Naive thymus-derived CD4-positive, alpha-beta T cell (primary cell): ENCODE measurements at regions of chr2 and their contacts with region 1.

Region 1: GRCh38 chr2:24577481-24577880 is 86.4 kb downstream of the NCOA1 start:
- DNase-seq: no peak
- ATAC-seq: no peak
- H3K4me3 ChIP-seq: no peak overlapping the region
- H3K4me3 Mint-ChIP-seq: peak overlapping the region in 5 of 10 donors; percentile 16 to 73 (median 61)
- H3K27ac ChIP-seq: no peak overlapping the region
- H3K27ac Mint-ChIP-seq: peak overlapping the region in 3 of 9 donors; percentile 5 to 57 (median 35)
- H3K4me1 ChIP-seq: peaks cover 6 to 18% of the 10 kb centered on the region in 2 donors
- H3K4me1 Mint-ChIP-seq: peaks cover 40 to 81% (median 72%) of the 10 kb centered on the region in 7 donors
- H3K27me3 ChIP-seq: no peaks in the 10 kb centered on the region
- H3K27me3 Mint-ChIP-seq: no peaks in the 10 kb centered on the region

Region 2: DNA sequence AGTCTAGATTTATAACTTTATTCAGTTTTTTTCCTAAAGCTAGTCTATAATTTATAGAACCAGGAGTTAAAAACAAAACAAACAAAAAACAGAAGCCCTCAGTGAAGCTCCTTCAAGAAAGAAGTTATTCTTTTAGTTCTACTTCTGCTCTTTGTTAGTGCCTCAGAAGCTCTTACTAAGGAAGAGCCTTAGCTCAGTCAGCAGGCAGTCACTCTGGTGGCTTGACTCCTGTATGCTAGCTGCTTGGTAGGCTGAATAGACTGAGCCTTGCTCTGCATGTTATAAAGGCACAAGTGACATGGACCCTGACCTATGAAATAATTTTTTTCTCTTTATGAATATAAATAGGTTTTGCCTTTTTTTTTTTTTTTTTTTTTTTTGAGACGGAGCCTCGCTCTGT is 61.6 kb before region 1 on chr2:
- CTCF ChIA-PET with region 1: no interaction called
- POLR2A ChIA-PET with region 1: no interaction called
- intact Hi-C with region 1: loop called in 1 of 2 experiments (anchors 5 kb)
- DNase-seq: no peak
- ATAC-seq: no peak
- H3K4me3 ChIP-seq: no peak overlapping the region
- H3K4me3 Mint-ChIP-seq: no peak overlapping the region
- H3K27ac ChIP-seq: no peak overlapping the region
- H3K27ac Mint-ChIP-seq: no peak overlapping the region
- H3K4me1 ChIP-seq: peaks cover 9 to 10% of the 10 kb centered on the region in 2 donors
- H3K4me1 Mint-ChIP-seq: peaks cover 28 to 84% (median 76%) of the 10 kb centered on the region in 7 donors
- H3K27me3 ChIP-seq: no peaks in the 10 kb centered on the region
- H3K27me3 Mint-ChIP-seq: no peaks in the 10 kb centered on the region

Region 3: GRCh38 chr2:24613154-24613814 is 35.8 kb after region 1 on chr2:
- CTCF ChIA-PET with region 1: no interaction called
- POLR2A ChIA-PET with region 1: no interaction called
- intact Hi-C with region 1: loop called in 1 of 2 experiments (anchors 5 kb)
- DNase-seq: peak in 1 of 9 donors; percentile 22
- ATAC-seq: peak; percentile 81
- H3K4me3 ChIP-seq: no peak overlapping the region
- H3K4me3 Mint-ChIP-seq: peak overlapping the region in 2 of 10 donors; percentile 1 to 18
- H3K27ac ChIP-seq: no peak overlapping the region
- H3K27ac Mint-ChIP-seq: peak overlapping the region in 2 of 9 donors; percentile 74 to 92
- H3K4me1 ChIP-seq: no peaks in the 10 kb centered on the region
- H3K4me1 Mint-ChIP-seq: peaks cover 10 to 37% (median 26%) of the 10 kb centered on the region in 7 donors
- H3K27me3 ChIP-seq: no peaks in the 10 kb centered on the region
- H3K27me3 Mint-ChIP-seq: no peaks in the 10 kb centered on the region